ENCODE measurements at regions of chr6 and their contacts with region 1.

Region 1: GRCh38 chr6:107847844-107848802 is 24.0 kb upstream of the SCML4 start:
- DNase-seq: peak; percentile 68
- H3K4me3 ChIP-seq: peak overlapping the region; percentile 49
- H3K27ac ChIP-seq: no peak overlapping the region
- H3K4me1 ChIP-seq: peaks cover 6% of the 10 kb centered on the region
- CTCF ChIP-seq: peak; percentile 95

Region 2: DNA sequence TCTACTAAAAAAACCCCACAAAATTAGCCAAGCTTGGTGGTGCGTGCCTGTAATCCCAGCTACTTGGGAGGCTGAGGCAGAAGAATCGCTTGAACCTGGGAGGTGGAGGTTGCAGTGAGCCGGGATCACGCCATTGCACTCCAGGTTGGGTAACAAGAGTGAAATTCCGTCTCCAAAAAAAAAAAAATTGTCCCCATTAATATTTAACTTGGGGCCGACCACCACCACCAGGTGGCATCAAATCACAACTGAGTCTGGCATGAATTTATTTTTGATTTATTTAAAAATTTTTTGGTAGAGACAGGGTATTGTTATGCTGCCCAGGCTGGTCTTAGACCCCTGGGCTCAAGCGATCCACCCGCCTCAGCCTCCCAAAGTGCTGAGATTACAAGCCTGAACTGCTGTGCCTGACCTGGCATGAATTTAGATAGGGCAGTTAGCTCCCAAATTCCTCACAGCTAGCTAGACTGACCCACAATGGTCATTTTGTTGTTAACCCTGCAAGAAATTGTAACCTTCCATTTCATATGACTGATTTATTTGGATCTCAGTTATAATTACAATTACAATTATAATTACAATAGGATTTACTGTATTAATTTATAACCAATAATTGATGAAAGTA is 715.7 kb before region 1 on chr6:
- CTCF ChIA-PET with region 1: no interaction called
- POLR2A ChIA-PET with region 1: no interaction called
- intact Hi-C with region 1: loop called (anchors 2 kb)
- DNase-seq: peak; percentile 71
- H3K4me3 ChIP-seq: no peak overlapping the region
- H3K27ac ChIP-seq: no peak overlapping the region
- H3K4me1 ChIP-seq: peaks cover 13% of the 10 kb centered on the region
- CTCF ChIP-seq: peak; percentile 86

Region 3: GRCh38 chr6:107318100-107318736 is 529.9 kb before region 1 on chr6:
- CTCF ChIA-PET with region 1: no interaction called
- POLR2A ChIA-PET with region 1: no interaction called
- intact Hi-C with region 1: loop called (anchors 5 kb)
- DNase-seq: peak; percentile 80
- H3K4me3 ChIP-seq: no peak overlapping the region
- H3K27ac ChIP-seq: no peak overlapping the region
- H3K4me1 ChIP-seq: peaks cover 33% of the 10 kb centered on the region
- CTCF ChIP-seq: peak; percentile 98

Region 4: DNA sequence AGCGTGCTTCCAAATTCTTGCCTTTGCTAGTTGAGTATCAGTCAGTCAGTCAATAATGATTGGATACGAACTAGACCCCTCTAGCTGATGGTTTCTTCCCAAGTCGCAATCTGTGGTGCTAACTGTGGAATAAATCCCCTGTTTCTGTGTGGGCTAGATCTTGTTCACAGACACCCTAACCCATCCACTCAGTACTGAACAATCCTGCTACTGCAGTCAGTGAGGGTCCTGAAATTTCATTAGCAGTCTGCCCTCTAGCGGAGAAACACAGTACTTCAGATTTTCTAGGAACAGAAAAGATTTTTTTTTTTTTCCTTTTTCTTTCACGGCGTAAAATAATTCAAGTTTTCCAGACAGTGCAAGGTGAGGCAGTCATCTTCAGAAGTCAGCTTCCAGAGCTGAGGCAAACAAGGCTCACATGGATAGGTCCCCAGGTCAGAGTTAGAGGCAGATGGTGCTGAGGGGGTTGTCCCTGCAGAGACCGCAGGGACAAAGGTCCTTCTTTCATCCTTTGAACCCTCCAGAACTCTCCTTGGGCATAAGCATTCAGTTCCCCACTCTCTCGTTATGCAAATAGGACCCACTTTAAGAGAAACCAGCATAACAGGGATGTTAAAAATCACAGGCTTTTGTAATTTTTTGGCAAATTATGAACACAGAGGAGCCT is 143.6 kb before region 1 on chr6:
- CTCF ChIA-PET with region 1: no interaction called
- POLR2A ChIA-PET with region 1: no interaction called
- intact Hi-C with region 1: loop called (anchors 10 kb)
- DNase-seq: peak; percentile 69
- H3K4me3 ChIP-seq: no peak overlapping the region
- H3K27ac ChIP-seq: no peak overlapping the region
- H3K4me1 ChIP-seq: no peaks in the 10 kb centered on the region
- CTCF ChIP-seq: peak; percentile 96

Region 5: GRCh38 chr6:107800564-107801164 is 47.5 kb before region 1 on chr6:
- CTCF ChIA-PET with region 1: interaction called, 3 read pairs
- POLR2A ChIA-PET with region 1: no interaction called
- intact Hi-C with region 1: loop called (anchors 2 kb)
- DNase-seq: no peak
- H3K4me3 ChIP-seq: no peak overlapping the region
- H3K27ac ChIP-seq: no peak overlapping the region
- H3K4me1 ChIP-seq: no peaks in the 10 kb centered on the region
- CTCF ChIP-seq: peak; percentile 60

Region 6: DNA sequence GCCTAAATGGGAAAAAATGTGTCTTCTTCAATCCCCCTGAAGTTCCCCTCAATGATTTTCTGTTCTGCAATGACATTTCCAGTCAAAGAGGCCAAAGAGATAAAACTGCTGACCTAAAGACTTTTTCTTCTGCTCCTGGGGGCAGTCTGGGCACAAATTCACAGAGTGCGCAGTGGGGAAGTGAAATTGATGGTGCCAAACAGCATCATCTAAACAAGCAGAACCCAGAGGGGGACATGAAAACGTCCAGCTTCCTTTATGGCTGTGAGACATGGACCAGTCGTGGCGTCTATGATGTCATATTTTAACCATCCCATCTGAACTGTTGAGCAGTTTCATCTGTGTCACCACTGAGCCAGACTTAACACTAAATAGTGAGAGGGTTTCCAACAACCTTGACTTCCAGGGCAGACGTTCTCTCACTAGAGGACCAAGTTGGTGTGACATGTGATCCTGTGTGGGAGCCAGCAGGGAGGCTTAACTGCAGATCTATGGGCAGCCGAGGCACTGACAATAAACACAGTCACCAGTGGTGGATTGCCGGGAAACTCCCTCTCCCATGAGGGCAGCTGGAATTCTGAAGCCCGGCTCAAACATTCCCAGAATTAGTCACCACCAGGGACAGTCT is 36.4 kb before region 1 on chr6:
- CTCF ChIA-PET with region 1: no interaction called
- POLR2A ChIA-PET with region 1: no interaction called
- intact Hi-C with region 1: no loop called
- DNase-seq: no peak
- H3K4me3 ChIP-seq: no peak overlapping the region
- H3K27ac ChIP-seq: no peak overlapping the region
- H3K4me1 ChIP-seq: no peaks in the 10 kb centered on the region
- CTCF ChIP-seq: no peak

Region 7: GRCh38 chr6:108395297-108395696 is 547.2 kb after region 1 on chr6:
- CTCF ChIA-PET with region 1: no interaction called
- POLR2A ChIA-PET with region 1: no interaction called
- intact Hi-C with region 1: no loop called
- DNase-seq: no peak
- H3K4me3 ChIP-seq: no peak overlapping the region
- H3K27ac ChIP-seq: no peak overlapping the region
- H3K4me1 ChIP-seq: no peaks in the 10 kb centered on the region
- CTCF ChIP-seq: no peak

Measured in OCI-LY7 (cell line).